ENCODE measurements at regions of chr12 and their contacts with region 1.

Region 1: DNA sequence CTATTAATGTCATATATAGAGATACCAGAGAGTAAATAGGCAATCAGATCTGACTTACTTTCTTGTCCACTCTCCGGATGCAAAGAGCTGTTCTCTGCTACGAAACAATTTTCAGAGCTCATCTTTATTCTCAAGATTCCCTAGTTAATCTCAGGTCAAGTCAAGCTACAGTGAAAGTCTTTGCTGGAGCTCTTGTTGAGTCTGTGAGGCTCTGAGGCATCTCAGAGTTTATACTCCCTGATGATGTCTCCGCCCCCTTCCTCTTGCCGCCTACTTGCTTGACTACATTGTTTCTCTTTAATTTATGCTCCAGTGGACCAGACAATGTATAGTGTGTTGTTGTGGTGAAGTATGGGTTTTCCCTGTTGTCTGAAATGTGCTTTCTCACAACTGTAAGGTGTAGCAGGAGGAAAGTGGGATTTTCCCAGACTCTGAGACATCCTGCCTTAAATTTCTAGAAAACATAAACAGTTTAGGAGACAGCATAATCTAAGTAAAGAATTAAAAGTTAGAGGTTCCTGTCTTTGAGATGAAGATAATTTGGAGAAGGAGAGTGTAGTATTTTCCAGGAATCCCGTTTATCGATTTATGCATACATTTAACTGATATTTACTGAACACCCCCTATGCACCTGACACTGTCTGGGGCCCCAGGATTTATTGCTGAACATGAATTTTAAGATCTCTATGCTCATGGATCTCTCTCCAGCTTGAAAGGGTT is at the start of gene CD69:
- DNase-seq: peak; percentile 60 to 96 (median 77)
- ATAC-seq: peak; percentile 53
- H3K4me3 ChIP-seq: peak within 1 kb of the TSS; percentile 79
- H3K4me3 Mint-ChIP-seq: peak within 1 kb of the TSS; percentile 100
- H3K27ac ChIP-seq: peak within 1 kb of the TSS; percentile 97 to 98
- H3K27ac Mint-ChIP-seq: peak within 1 kb of the TSS; percentile 96
- H3K4me1 ChIP-seq: peaks cover 51% of the 10 kb centered on the region
- H3K4me1 Mint-ChIP-seq: peaks cover 64% of the 10 kb centered on the region
- H3K27me3 ChIP-seq: no peaks in the 10 kb centered on the region
- H3K27me3 Mint-ChIP-seq: no peaks in the 10 kb centered on the region
- CTCF ChIP-seq: no peak
- total RNA-seq, gene CD69: 502 to 504 TPM

Region 2: GRCh38 chr12:9731797-9732196 is 29.1 kb before region 1 on chr12:
- CTCF ChIA-PET with region 1: no interaction called
- POLR2A ChIA-PET with region 1: no interaction called
- intact Hi-C with region 1: no loop called
- DNase-seq: no peak
- ATAC-seq: no peak
- H3K4me3 ChIP-seq: no peak overlapping the region
- H3K4me3 Mint-ChIP-seq: peak overlapping the region; percentile 18
- H3K27ac ChIP-seq: no peak overlapping the region
- H3K27ac Mint-ChIP-seq: no peak overlapping the region
- H3K4me1 ChIP-seq: peaks cover 5% of the 10 kb centered on the region
- H3K4me1 Mint-ChIP-seq: peaks cover 21% of the 10 kb centered on the region
- H3K27me3 ChIP-seq: no peaks in the 10 kb centered on the region
- H3K27me3 Mint-ChIP-seq: peaks cover 1% of the 10 kb centered on the region
- CTCF ChIP-seq: no peak

Region 3: DNA sequence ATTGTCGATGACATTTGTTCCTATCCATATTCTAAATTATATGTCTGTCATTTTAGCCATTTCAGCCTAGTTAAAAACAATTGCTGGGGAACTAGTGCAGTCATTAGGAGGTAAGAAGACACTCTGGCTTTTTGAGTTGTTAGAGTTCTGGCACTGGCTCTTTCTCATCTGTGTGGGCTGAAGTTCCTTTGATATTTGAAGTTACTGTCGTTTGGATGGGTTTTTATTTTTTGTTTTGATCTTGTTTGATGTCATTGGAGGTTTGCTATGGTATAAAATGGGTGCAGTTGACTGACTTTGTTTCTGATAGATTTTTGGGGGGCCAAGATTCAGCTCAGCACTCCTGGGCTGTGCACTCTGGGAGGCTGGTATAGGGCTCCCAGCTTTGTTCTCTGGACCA is 20.5 kb after region 1 on chr12:
- CTCF ChIA-PET with region 1: interaction called, 6 read pairs
- POLR2A ChIA-PET with region 1: interaction called, 4 read pairs
- intact Hi-C with region 1: loop called in 1 of 2 experiments (anchors 2 kb)
- DNase-seq: peak in 1 of 9 experiments; percentile 33
- ATAC-seq: no peak
- H3K4me3 ChIP-seq: no peak overlapping the region
- H3K4me3 Mint-ChIP-seq: peak overlapping the region; percentile 3
- H3K27ac ChIP-seq: no peak overlapping the region
- H3K27ac Mint-ChIP-seq: peak overlapping the region; percentile 33
- H3K4me1 ChIP-seq: peaks cover 9% of the 10 kb centered on the region
- H3K4me1 Mint-ChIP-seq: peaks cover 39% of the 10 kb centered on the region
- H3K27me3 ChIP-seq: no peaks in the 10 kb centered on the region
- H3K27me3 Mint-ChIP-seq: no peaks in the 10 kb centered on the region
- CTCF ChIP-seq: no peak

Region 4: GRCh38 chr12:9992296-9992695 is 231.4 kb after region 1 on chr12:
- CTCF ChIA-PET with region 1: no interaction called
- POLR2A ChIA-PET with region 1: no interaction called
- intact Hi-C with region 1: no loop called
- DNase-seq: no peak
- ATAC-seq: no peak
- H3K4me3 ChIP-seq: no peak overlapping the region
- H3K4me3 Mint-ChIP-seq: no peak overlapping the region
- H3K27ac ChIP-seq: no peak overlapping the region
- H3K27ac Mint-ChIP-seq: no peak overlapping the region
- H3K4me1 ChIP-seq: no peaks in the 10 kb centered on the region
- H3K4me1 Mint-ChIP-seq: no peaks in the 10 kb centered on the region
- H3K27me3 ChIP-seq: no peaks in the 10 kb centered on the region
- H3K27me3 Mint-ChIP-seq: peaks cover 17% of the 10 kb centered on the region
- CTCF ChIP-seq: no peak